HCT116 (cell line): ENCODE measurements at regions of chr19 and their contacts with region 1.

Region 1: DNA sequence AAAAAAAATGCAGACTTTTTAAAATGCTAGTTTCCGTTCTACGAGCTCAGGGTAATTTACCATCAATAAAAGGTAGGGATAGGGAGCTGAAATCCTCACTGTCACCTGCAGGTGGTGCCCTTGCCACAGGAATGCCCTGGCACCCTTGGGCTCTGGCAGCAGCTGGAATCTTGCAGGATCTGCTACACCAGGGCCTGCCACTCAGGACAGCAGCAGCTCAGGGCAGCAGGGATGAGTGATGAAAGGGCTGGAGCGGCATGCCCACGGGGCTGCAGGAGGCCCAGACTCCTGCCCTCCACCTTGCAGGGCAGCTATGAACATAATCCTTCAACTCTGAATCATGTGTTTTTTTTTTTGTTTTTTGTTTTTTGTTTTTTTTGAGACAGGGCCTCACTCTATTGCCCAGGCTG is 54.0 kb downstream of the GNG7 start:
- DNase-seq: peak; percentile 51
- ATAC-seq: peak; percentile 98
- H3K4me3 ChIP-seq: no peak overlapping the region
- H3K27ac ChIP-seq: no peak overlapping the region
- H3K4me1 ChIP-seq: peaks cover 0 to under 1% of the 10 kb centered on the region in 2 experiments; a peak in 1 of 4 replicates
- H3K27me3 ChIP-seq: no peaks in the 10 kb centered on the region
- CTCF ChIP-seq: peak; percentile 76 to 96 (median 95)
- POLR2A ChIP-seq: no peak
- RAD21 ChIP-seq: peak; percentile 99

Region 2: DNA sequence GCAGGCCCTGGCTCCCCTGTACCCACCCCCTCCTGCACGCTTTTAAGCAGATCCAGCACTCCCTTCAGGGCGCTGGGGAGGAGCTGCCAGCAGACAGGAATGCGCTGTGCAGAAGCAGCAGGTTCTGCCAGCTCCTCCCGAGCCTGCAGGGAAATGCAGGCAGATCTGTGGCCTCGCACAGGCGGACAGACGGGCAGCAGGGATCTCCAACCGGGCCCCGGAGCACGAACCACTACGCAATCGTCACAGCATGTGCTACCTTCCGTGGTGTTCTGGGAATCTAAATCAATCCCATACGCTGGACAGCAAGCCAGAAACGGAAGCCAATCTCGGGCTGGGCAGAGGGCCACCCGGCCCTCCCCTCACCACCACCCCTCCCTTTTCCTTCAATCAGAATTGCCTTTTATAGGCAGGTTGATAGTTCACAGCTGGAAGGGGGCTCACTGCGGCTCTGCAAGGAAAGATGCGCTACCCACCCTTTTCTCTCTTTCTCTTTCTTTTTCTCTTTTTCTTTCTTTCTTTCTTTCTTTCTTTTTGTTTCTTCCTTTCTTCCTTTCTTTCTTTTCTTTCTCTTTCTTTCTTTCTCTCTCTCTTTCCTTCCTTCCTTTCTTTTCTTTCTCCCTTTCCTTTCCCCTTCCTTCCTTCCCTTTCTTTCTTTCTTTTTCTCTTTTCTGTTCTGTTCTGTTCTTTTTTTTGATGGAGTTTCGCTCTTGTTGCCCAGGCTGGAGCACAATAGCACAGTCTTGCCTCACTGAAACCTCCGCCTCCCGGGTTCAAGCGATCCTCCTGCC is 45.9 kb before region 1 on chr19:
- CTCF ChIA-PET with region 1: no interaction called
- POLR2A ChIA-PET with region 1: no interaction called
- RAD21 ChIA-PET with region 1: no interaction called
- intact Hi-C with region 1: no loop called
- DNase-seq: no peak
- ATAC-seq: no peak
- H3K4me3 ChIP-seq: no peak overlapping the region
- H3K27ac ChIP-seq: no peak overlapping the region
- H3K4me1 ChIP-seq: peaks cover 14 to 17% of the 10 kb centered on the region in 2 experiments
- H3K27me3 ChIP-seq: no peaks in the 10 kb centered on the region
- CTCF ChIP-seq: no peak
- POLR2A ChIP-seq: no peak
- RAD21 ChIP-seq: no peak

Region 3: GRCh38 chr19:2636897-2637683 is 11.4 kb before region 1 on chr19:
- CTCF ChIA-PET with region 1: interaction called, 12 read pairs
- POLR2A ChIA-PET with region 1: no interaction called
- RAD21 ChIA-PET with region 1: interaction called in 1 of 2 experiments, 3 read pairs
- intact Hi-C with region 1: no loop called
- DNase-seq: no peak
- ATAC-seq: peak; percentile 86
- H3K4me3 ChIP-seq: no peak overlapping the region
- H3K27ac ChIP-seq: no peak overlapping the region
- H3K4me1 ChIP-seq: peaks cover 5 to 15% of the 10 kb centered on the region in 2 experiments; a peak in 2 of 4 replicates
- H3K27me3 ChIP-seq: no peaks in the 10 kb centered on the region
- CTCF ChIP-seq: peak; percentile 87 to 90 (median 89)
- POLR2A ChIP-seq: no peak
- RAD21 ChIP-seq: peak; percentile 91

Region 4: GRCh38 chr19:2750808-2751443 is 102.4 kb after region 1 on chr19:
- CTCF ChIA-PET with region 1: interaction called, 52 read pairs
- POLR2A ChIA-PET with region 1: no interaction called
- RAD21 ChIA-PET with region 1: interaction called, 14 to 16 read pairs
- intact Hi-C with region 1: loop called (anchors 1 kb)
- DNase-seq: no peak
- ATAC-seq: no peak
- H3K4me3 ChIP-seq: no peak overlapping the region
- H3K27ac ChIP-seq: no peak overlapping the region
- H3K4me1 ChIP-seq: peaks cover 0 to 4% of the 10 kb centered on the region in 2 experiments; a peak in 3 of 4 replicates
- H3K27me3 ChIP-seq: no peaks in the 10 kb centered on the region
- CTCF ChIP-seq: no peak
- POLR2A ChIP-seq: no peak
- RAD21 ChIP-seq: no peak

Region 5: DNA sequence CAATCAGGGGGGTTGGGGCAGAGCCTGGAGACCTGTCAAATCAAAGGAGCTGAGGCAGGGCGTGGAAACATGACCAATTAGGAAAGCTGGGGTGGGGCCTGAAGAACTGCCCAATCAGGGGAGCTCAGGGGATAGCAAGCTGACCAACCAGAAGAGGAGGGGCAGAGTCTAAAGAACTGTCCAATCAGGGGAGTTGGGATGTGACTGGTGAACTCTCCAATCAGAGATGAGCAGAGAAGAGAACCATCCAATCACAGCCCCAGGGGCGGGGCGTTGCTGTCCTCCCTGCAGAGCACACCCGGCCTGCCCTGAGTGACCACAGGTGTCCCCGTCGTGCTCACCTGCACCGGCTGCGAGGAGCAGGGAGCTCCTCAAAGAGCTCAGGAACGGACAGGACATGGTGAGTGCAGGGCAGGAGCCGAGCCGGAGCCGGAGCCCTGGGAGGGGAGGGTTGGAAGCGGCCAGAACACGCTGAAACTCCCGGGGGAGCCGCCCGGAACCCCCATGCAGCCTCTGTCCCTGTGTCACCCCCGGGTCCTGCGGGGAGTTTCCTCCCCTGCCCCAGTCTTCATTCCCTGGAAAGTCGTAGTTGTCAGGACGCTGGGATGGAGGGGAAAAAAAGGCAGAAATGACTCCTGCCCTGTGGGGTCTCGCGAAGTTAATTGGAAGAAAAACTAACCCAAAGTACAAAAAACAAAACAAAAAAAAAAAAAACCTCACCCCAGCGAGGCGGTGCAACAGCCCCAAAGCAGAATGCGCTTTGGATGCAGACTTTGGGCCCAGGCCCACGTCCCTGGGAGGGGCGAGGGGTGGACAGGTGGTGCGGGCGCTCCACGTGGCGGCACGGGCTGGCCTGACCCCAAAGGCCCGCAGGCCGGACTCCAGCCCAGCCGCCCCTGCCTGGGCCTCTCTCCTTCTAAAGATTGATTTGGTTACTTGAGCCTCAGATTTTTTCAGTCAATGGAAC is 218.8 kb after region 1 on chr19 and contains the start of gene ZNF556:
- CTCF ChIA-PET with region 1: interaction called, 10 read pairs
- POLR2A ChIA-PET with region 1: no interaction called
- RAD21 ChIA-PET with region 1: no interaction called
- intact Hi-C with region 1: loop called (anchors 2 kb)
- DNase-seq: peak; percentile 16
- ATAC-seq: peak; percentile 73
- H3K4me3 ChIP-seq: no peak within 1 kb of the TSS
- H3K27ac ChIP-seq: no peak within 1 kb of the TSS
- H3K4me1 ChIP-seq: no peaks in the 10 kb centered on the region
- H3K27me3 ChIP-seq: no peaks in the 10 kb centered on the region
- CTCF ChIP-seq: no peak
- POLR2A ChIP-seq: no peak
- RAD21 ChIP-seq: no peak
- total RNA-seq, gene ZNF556: not detected

Region 6: DNA sequence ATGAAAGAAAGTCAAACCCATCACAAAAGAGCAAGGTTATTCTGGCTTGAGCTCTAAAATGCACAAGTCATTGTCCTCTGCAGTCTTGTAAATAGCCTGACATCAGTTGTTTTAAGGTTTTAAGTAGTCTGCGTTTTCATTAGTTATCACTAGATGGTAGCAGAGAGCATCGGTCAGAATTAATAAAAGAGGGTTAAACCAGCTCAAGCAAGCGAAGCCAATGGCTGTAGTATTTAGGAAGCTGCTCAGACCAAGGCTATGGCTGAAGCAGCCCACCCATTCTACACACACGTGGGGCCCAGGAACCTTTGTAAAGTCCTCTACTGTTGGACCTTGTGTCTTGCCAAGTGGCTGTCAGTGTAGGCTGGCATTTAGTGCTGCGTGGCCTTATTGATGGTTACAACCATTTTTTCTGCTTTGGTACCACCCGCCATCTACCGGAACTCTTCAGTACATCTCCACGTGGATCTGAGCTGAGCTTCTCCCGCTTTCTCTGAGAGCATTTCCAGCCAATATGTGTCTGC is 238.9 kb after region 1 on chr19:
- CTCF ChIA-PET with region 1: interaction called, 19 read pairs
- POLR2A ChIA-PET with region 1: no interaction called
- RAD21 ChIA-PET with region 1: no interaction called
- intact Hi-C with region 1: no loop called
- DNase-seq: peak; percentile 64
- ATAC-seq: peak; percentile 90
- H3K4me3 ChIP-seq: no peak overlapping the region
- H3K27ac ChIP-seq: no peak overlapping the region
- H3K4me1 ChIP-seq: no peaks in the 10 kb centered on the region
- H3K27me3 ChIP-seq: no peaks in the 10 kb centered on the region
- CTCF ChIP-seq: peak; percentile 47 to 64 (median 56); a peak in 5 of 6 replicates
- POLR2A ChIP-seq: no peak
- RAD21 ChIP-seq: peak; percentile 68